IMR-90 (cell line): ENCODE measurements at regions of chr9 and their contacts with region 1.

Region 1: DNA sequence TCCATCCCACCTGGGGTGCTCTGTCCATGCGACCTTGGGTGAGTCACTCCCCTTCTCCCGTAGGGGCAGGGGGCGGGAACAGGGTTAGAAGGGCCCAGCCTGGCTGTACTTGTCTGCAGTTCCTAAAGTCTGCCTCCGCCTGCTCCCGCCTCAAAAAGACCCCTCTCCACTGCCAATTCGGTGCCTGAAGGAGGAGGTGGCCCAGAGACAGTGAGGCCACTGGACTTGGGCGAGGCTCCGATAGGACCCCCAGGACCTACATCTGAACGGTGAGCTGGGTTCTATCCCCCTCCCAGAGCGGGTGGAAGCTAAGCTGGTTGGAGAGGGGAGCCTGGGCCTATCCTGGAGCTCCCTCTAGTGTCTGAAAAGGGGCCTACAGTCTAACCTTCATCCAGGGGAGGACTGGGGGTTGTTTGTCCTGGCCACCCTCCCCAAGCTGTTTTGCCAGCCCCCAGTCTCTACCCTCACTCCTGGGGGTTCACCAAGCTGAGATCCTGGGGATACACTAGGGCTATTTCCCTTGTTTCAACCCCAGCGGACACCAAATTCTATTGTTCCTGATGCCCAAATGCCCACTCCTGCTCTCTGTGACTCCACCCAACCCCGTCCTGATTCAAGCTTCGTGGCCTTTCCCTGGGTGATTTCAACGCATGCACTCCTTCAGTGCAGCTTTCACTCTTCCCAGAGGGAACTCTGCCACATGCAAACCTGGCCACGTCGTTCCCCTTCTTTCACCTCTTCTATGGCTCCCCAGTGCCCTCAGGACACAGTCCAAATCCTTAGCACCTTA is 6.1 kb upstream of the CRB2 start:
- DNase-seq: peak; percentile 43
- ATAC-seq: peak; percentile 88
- H3K4me3 ChIP-seq: no peak overlapping the region
- H3K27ac ChIP-seq: no peak overlapping the region
- H3K4me1 ChIP-seq: peaks cover 2% of the 10 kb centered on the region; the same call in 1 of the 2 replicates
- H3K27me3 ChIP-seq: peaks cover 42% of the 10 kb centered on the region
- CTCF ChIP-seq: peak; percentile 93
- POLR2A ChIP-seq: no peak
- RAD21 ChIP-seq: peak; percentile 98

Region 2: DNA sequence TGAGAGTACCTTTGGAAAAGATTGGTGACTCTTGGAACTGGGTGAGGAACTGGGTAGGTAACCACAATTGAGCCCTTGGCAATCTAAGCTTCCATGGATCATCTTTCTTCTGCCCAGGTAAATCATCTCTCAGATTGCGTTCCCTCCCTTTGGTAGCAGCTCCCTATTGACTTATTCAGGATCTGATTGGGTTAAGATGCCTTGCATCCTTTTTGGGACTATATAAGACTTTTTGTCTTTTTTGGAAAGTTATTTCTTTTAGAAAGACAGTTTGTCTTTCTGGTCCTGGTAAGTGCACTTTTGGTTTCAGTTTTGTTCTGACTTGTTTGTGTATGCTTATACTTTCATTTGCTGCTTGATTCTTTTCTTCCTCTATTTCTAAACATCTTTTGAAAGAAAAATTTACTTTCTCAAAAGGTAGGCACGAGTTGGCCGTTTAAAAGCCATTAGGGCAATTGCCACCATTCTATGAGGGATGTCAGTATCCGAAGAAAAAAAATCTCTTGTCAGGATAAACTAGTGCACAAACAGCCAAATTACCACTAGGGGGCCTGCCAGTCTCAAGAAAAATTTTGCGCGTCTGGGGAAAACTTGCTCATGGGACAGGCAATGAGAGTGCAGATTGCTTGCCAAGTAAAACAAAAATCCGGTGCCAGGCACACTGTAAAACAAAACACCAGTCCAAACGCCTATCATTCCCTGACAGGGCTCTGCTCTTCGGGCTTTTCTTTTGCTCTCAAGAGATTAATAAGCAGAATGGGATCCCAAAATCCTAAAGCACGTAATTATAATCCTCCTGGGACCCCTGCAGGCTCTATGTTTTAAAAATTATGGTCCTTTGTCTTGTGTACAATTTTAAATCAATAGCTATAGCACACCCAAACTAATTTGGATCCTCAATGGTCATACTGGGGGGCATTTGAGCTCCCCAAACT is 885.0 kb before region 1 on chr9:
- CTCF ChIA-PET with region 1: no interaction called
- POLR2A ChIA-PET with region 1: no interaction called
- dilution Hi-C with region 1: no loop called
- in situ Hi-C with region 1: no loop called
- intact Hi-C with region 1: loop called (anchors 5 kb)
- DNase-seq: peak; percentile 91
- ATAC-seq: peak; percentile 77
- H3K4me3 ChIP-seq: peak overlapping the region; percentile 54; the same call in 1 of the 2 replicates
- H3K27ac ChIP-seq: peak overlapping the region; percentile 15; the same call in 1 of the 2 replicates
- H3K4me1 ChIP-seq: no peaks in the 10 kb centered on the region; the same call in 1 of the 2 replicates
- H3K27me3 ChIP-seq: no peaks in the 10 kb centered on the region
- CTCF ChIP-seq: peak; percentile 90
- POLR2A ChIP-seq: no peak
- RAD21 ChIP-seq: peak; percentile 79

Region 3: DNA sequence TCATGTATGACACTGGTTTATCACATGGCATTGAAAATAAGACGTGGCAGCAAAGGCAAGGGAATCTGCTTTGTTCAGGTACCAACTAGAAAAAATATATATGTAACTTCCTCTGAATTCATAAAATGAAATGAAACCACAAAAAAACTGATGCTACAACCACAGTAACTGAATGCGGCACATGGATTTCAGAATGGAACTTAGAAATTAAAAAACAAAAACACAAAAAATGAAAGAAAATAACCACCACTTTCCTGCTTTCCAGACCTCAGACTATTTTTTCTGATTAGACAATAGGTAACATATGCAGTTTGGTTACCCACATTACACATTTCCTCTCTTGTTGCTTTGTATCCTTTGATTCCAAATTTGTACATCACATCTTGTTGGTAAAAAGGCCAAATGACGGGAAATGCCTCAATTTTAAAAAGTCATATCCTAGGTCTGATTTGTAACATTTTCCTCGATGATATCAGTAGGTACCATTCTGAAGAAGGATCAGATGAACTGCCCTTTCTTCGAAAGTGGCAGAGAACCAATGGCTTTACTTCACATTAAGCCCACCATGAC is 503.4 kb before region 1 on chr9:
- CTCF ChIA-PET with region 1: no interaction called
- POLR2A ChIA-PET with region 1: no interaction called
- dilution Hi-C with region 1: no loop called
- in situ Hi-C with region 1: loop called (anchors 25 kb)
- intact Hi-C with region 1: loop called (anchors 10 kb)
- DNase-seq: no peak
- ATAC-seq: no peak
- H3K4me3 ChIP-seq: no peak overlapping the region
- H3K27ac ChIP-seq: no peak overlapping the region
- H3K4me1 ChIP-seq: no peaks in the 10 kb centered on the region
- H3K27me3 ChIP-seq: no peaks in the 10 kb centered on the region
- CTCF ChIP-seq: no peak
- POLR2A ChIP-seq: no peak
- RAD21 ChIP-seq: no peak

Region 4: DNA sequence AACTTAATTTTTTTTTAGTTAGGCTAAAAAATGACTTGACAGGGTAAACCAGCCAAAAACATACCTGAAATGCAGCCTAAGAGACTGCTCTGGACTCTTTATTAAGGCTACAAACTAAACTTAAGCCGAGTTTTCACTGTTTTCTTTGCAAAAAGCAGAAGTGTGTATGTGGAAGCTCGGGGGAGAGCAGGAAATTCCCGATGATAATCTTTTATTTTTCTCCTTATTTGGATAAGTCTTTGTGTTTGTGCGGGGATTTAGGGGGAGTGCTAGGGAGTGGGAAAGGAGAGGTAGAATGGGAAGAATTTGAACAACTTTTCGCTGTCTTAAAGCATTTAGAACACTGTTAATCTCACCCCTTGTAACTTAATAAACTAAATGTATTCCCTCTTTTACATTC is 347.1 kb before region 1 on chr9:
- CTCF ChIA-PET with region 1: interaction called, 3 read pairs
- POLR2A ChIA-PET with region 1: no interaction called
- dilution Hi-C with region 1: no loop called
- in situ Hi-C with region 1: no loop called
- intact Hi-C with region 1: loop called (anchors 10 kb)
- DNase-seq: peak; percentile 18
- ATAC-seq: peak; percentile 15
- H3K4me3 ChIP-seq: no peak overlapping the region
- H3K27ac ChIP-seq: peak overlapping the region; percentile 80; the same call in 1 of the 2 replicates
- H3K4me1 ChIP-seq: peaks cover 5% of the 10 kb centered on the region; the same call in 1 of the 2 replicates
- H3K27me3 ChIP-seq: no peaks in the 10 kb centered on the region
- CTCF ChIP-seq: no peak
- POLR2A ChIP-seq: no peak
- RAD21 ChIP-seq: no peak

Region 5: DNA sequence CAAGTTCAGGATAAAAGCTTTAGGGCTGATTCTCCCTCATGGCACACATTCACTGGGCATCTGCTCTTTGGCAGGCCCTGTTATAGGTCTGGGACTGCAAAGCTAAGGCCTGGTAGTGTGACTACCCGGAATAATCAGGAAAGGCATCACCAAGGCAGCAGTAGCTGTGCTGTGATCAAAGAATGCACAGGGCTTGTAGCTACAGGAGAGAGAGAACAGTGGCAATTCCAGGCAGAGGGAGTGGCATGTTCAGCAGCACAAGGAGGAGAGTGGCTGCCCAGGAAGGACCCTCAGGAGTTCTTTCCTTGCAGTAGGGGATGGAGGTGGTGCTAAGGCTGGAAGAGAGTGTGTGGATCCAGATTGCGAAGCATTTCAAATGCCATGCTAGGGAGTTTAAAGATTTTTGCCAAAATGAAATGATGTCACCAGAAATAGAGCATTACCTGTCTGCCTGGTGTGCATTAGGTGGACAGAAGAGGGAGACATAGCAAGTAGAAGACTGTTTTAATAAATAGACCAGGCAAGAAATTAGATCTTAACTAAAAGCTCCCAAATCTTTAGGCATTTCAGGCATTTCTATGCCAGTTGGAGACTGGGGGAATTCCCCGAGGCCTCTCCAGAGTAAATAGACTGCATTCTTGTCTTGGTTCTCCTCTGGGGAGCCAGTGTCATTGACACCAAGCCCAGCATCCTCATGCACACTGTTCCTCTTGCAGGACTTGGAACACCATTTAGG is 247.3 kb before region 1 on chr9:
- CTCF ChIA-PET with region 1: interaction called, 6 read pairs
- POLR2A ChIA-PET with region 1: no interaction called
- dilution Hi-C with region 1: no loop called
- in situ Hi-C with region 1: no loop called
- intact Hi-C with region 1: loop called (anchors 1 kb)
- DNase-seq: peak; percentile 40
- ATAC-seq: peak; percentile 88
- H3K4me3 ChIP-seq: no peak overlapping the region
- H3K27ac ChIP-seq: no peak overlapping the region
- H3K4me1 ChIP-seq: peaks cover 7% of the 10 kb centered on the region; the same call in 1 of the 2 replicates
- H3K27me3 ChIP-seq: no peaks in the 10 kb centered on the region
- CTCF ChIP-seq: peak; percentile 47
- POLR2A ChIP-seq: no peak
- RAD21 ChIP-seq: peak; percentile 44